CD4-positive, alpha-beta memory T cell (primary cell): ENCODE measurements at regions of chr2 and their contacts with region 1.

Region 1: DNA sequence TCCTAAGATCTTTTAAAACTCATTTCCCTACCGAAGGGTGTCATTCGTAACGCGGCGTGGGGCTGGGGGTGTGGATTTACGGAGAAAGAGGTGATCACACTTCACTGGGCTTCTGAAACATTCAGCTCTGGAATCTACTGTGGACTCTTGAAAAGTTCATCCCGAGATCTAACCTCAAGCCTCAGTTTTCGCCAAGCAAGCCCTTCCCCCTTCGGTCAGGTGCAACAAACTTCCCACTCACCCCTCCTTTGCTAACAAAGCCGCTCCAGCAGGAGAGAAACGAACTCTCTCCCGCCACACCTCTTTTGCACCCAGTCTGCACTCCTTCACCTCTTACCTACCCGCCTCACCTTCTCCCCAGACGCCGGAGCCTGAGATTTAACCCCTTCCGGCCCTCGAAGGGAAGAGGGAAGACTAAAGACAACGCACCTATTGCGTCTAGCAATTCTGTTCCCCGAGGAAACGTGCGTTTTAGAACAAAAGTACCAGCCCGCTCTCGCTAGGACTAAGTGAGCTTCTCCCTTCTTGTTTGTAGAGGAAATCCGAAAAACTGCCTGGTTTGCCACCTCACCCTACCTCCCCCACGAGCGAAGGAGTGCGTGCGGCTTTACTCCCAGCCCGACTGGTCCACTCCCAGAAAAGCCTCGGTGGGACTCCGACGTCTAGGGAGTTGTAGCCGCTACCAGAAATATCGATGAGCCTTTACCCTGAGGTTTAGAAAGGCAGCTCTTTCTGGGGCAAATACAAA is 538 bp upstream of the PEX13 start:
- DNase-seq: peak; percentile 73 to 82 (median 76)
- H3K4me3 ChIP-seq: peak overlapping the region; percentile 91 to 99
- H3K4me3 Mint-ChIP-seq: peak overlapping the region; percentile 98 to 100 (median 99)
- H3K27ac ChIP-seq: peak overlapping the region; percentile 80
- H3K27ac Mint-ChIP-seq: peak overlapping the region; percentile 92 to 98 (median 97)
- H3K4me1 ChIP-seq: peaks cover 25% of the 10 kb centered on the region
- H3K4me1 Mint-ChIP-seq: peaks cover 13 to 52% (median 36%) of the 10 kb centered on the region in 4 donors
- H3K27me3 ChIP-seq: no peaks in the 10 kb centered on the region
- H3K27me3 Mint-ChIP-seq: no peaks in the 10 kb centered on the region

Region 2: DNA sequence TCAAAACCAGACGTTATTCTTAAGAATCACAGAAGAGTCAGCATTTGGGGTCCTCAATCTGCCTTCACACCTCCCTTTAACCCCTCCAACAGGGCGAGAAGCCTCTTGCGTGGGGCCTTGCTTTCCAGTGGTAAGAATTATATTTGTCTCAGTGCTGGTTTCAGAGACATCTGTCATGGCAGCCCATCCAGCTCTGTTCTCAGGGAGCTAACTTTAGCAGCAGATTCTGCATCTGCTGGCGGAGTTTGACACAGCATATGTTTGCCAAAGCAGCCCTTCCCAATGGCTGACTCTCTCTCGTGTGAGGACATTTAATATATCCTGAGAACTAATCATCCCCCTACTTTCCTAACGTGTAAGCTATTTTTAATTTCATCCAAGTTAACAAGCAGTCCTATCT is 372.0 kb before region 1 on chr2:
- CTCF ChIA-PET with region 1: no interaction called
- POLR2A ChIA-PET with region 1: no interaction called
- intact Hi-C with region 1: no loop called
- DNase-seq: no peak
- H3K4me3 ChIP-seq: no peak overlapping the region
- H3K4me3 Mint-ChIP-seq: no peak overlapping the region
- H3K27ac ChIP-seq: no peak overlapping the region
- H3K27ac Mint-ChIP-seq: no peak overlapping the region
- H3K4me1 ChIP-seq: no peaks in the 10 kb centered on the region
- H3K4me1 Mint-ChIP-seq: no peaks in the 10 kb centered on the region
- H3K27me3 ChIP-seq: no peaks in the 10 kb centered on the region
- H3K27me3 Mint-ChIP-seq: peaks cover 4 to 8% of the 10 kb centered on the region in 2 donors

Region 3: GRCh38 chr2:60756191-60757041 is 260.6 kb before region 1 on chr2 and contains the start of gene PAPOLG:
- CTCF ChIA-PET with region 1: interaction called, 5 read pairs
- POLR2A ChIA-PET with region 1: interaction called, 10 read pairs
- intact Hi-C with region 1: no loop called
- DNase-seq: peak; percentile 92 to 96 (median 93)
- H3K4me3 ChIP-seq: peak within 1 kb of the TSS; percentile 76 to 92
- H3K4me3 Mint-ChIP-seq: peak within 1 kb of the TSS; percentile 98 to 100 (median 100)
- H3K27ac ChIP-seq: peak within 1 kb of the TSS; percentile 89
- H3K27ac Mint-ChIP-seq: peak within 1 kb of the TSS; percentile 84 to 100 (median 99)
- H3K4me1 ChIP-seq: peaks cover 36% of the 10 kb centered on the region
- H3K4me1 Mint-ChIP-seq: peaks cover 28 to 51% (median 40%) of the 10 kb centered on the region in 4 donors
- H3K27me3 ChIP-seq: no peaks in the 10 kb centered on the region
- H3K27me3 Mint-ChIP-seq: no peaks in the 10 kb centered on the region
- total RNA-seq, gene PAPOLG: 40.1 to 40.3 TPM

Region 4: DNA sequence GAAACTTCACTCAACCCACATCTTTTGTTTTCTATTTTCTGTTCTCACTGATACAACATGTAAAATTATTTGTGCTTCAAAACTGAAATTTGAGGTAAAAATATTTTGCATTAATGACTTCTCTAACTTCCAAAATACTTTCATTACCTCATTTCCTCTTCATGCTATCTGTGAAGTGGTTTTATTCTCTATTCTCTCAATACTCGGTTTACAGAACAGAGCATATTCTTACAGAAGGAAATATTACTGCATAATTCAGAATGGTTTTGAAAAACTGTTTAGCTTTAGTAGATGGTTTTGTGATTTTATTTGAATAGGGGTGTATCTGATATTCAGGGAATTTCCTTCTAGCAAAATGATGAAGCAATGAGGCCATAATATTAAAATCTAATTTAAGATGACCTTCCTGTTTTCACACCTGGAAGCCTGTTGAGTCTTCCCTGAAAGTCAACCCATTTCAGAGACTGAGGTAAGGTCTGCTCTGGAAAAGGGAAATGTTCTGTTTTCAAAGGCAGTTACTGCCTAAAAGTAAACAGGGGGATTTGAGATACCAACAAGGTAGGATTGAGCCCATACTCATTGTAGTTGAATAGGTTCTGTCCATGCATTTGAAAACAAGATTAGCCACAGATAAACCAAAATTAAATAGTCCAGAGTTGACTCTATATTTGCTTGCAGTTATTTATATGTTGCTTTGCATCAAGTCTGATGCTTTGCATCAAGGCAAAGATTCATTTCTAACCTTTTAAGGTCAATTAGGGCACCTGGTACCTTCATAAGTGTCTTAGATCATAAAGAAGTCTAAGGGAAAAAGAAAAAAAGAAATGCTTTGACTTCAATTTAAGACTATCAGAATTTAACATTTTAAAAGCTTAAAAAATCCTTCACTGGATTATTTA is 50.2 kb before region 1 on chr2:
- CTCF ChIA-PET with region 1: no interaction called
- POLR2A ChIA-PET with region 1: interaction called, 13 read pairs
- intact Hi-C with region 1: no loop called
- DNase-seq: no peak
- H3K4me3 ChIP-seq: no peak overlapping the region
- H3K4me3 Mint-ChIP-seq: peak overlapping the region in 7 of 8 donors; percentile 43 to 83 (median 70)
- H3K27ac ChIP-seq: no peak overlapping the region
- H3K27ac Mint-ChIP-seq: peak overlapping the region; percentile 10 to 91 (median 89)
- H3K4me1 ChIP-seq: peaks cover 47% of the 10 kb centered on the region
- H3K4me1 Mint-ChIP-seq: peaks cover 28 to 44% (median 35%) of the 10 kb centered on the region in 4 donors
- H3K27me3 ChIP-seq: no peaks in the 10 kb centered on the region
- H3K27me3 Mint-ChIP-seq: no peaks in the 10 kb centered on the region

Region 5: GRCh38 chr2:61065715-61066709 is 49.0 kb after region 1 on chr2 and contains the start of gene SANBR:
- CTCF ChIA-PET with region 1: no interaction called
- POLR2A ChIA-PET with region 1: interaction called, 3 read pairs
- intact Hi-C with region 1: loop called (anchors 1 kb)
- DNase-seq: peak; percentile 83 to 88 (median 86)
- H3K4me3 ChIP-seq: peak within 1 kb of the TSS; percentile 50 to 59
- H3K4me3 Mint-ChIP-seq: peak within 1 kb of the TSS; percentile 93 to 98 (median 97)
- H3K27ac ChIP-seq: peak within 1 kb of the TSS; percentile 51
- H3K27ac Mint-ChIP-seq: peak within 1 kb of the TSS; percentile 89 to 95 (median 93)
- H3K4me1 ChIP-seq: peaks cover 8% of the 10 kb centered on the region
- H3K4me1 Mint-ChIP-seq: peaks cover 7 to 16% (median 8%) of the 10 kb centered on the region in 4 donors
- H3K27me3 ChIP-seq: no peaks in the 10 kb centered on the region
- H3K27me3 Mint-ChIP-seq: no peaks in the 10 kb centered on the region
- total RNA-seq, gene SANBR: 5.4 to 6.0 TPM

Region 6: GRCh38 chr2:61144697-61145268 is 127.8 kb after region 1 on chr2:
- CTCF ChIA-PET with region 1: no interaction called
- POLR2A ChIA-PET with region 1: interaction called, 9 read pairs
- intact Hi-C with region 1: loop called (anchors 10 kb)
- DNase-seq: peak; percentile 88 to 90 (median 90)
- H3K4me3 ChIP-seq: peak overlapping the region; percentile 85 to 90
- H3K4me3 Mint-ChIP-seq: peak overlapping the region; percentile 91 to 97 (median 95)
- H3K27ac ChIP-seq: peak overlapping the region; percentile 55
- H3K27ac Mint-ChIP-seq: peak overlapping the region; percentile 86 to 98 (median 97)
- H3K4me1 ChIP-seq: peaks cover 10% of the 10 kb centered on the region
- H3K4me1 Mint-ChIP-seq: peaks cover 6 to 11% (median 9%) of the 10 kb centered on the region in 4 donors
- H3K27me3 ChIP-seq: no peaks in the 10 kb centered on the region
- H3K27me3 Mint-ChIP-seq: no peaks in the 10 kb centered on the region